Heart right ventricle (tissue), 16 donors: ENCODE measurements at regions of chrX and their contacts with region 1.

Region 1: GRCh38 chrX:133792198-133792953 is 193.0 kb downstream of the GPC3 start:
- DNase-seq: peak; percentile 32 to 35
- ATAC-seq: peak in 7 of 8 donors; percentile 65 to 88 (median 73)
- H3K4me3 ChIP-seq: peak overlapping the region in 6 of 10 donors; percentile 24 to 33 (median 30)
- H3K27ac ChIP-seq: no peak overlapping the region
- H3K4me1 ChIP-seq: no peaks in the 10 kb centered on the region
- H3K27me3 ChIP-seq: peaks cover 0 to 32% (median 0%) of the 10 kb centered on the region in 7 donors
- CTCF ChIP-seq: peak; percentile 62 to 98 (median 83)

Region 2: DNA sequence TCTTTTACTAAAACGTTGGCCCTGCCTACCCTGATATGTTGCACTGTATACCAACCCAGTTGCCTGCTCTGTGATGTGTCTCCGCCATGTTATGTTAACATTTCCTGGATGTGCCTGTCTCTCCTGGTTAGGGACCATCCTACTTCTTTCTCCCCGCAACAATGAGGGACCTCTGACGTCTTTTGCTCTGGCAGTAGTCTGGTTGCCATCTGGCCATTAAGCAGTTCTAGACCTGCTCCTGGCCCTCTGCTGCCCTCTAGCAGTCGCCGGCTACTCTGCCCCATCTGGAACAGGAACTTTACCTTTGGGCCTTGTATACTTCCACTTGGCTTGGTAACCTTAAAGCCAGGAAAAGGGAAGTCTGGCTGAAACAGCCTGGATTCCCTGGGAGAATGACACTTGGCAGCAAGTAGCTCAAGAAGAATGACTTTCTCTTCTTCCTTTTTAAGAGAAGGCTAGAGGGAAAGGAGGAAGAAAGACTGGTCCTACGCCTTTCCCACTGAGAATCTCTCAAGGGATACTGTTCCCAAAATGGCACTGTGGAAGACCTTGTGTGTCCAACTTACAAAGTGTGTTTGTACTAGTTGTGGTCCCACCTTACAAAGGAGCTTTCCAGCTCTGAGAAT is 129.5 kb after region 1 on chrX:
- intact Hi-C with region 1: loop called in 5 of 10 experiments (anchors 5 to 10 kb)
- DNase-seq: peak; percentile 3 to 25
- ATAC-seq: peak in 1 of 8 donors; percentile 75
- H3K4me3 ChIP-seq: no peak overlapping the region
- H3K27ac ChIP-seq: no peak overlapping the region
- H3K4me1 ChIP-seq: no peaks in the 10 kb centered on the region
- H3K27me3 ChIP-seq: peaks cover 0 to 15% (median 0%) of the 10 kb centered on the region in 7 donors
- CTCF ChIP-seq: peak in 7 of 9 donors; percentile 28 to 47 (median 43)

Region 3: DNA sequence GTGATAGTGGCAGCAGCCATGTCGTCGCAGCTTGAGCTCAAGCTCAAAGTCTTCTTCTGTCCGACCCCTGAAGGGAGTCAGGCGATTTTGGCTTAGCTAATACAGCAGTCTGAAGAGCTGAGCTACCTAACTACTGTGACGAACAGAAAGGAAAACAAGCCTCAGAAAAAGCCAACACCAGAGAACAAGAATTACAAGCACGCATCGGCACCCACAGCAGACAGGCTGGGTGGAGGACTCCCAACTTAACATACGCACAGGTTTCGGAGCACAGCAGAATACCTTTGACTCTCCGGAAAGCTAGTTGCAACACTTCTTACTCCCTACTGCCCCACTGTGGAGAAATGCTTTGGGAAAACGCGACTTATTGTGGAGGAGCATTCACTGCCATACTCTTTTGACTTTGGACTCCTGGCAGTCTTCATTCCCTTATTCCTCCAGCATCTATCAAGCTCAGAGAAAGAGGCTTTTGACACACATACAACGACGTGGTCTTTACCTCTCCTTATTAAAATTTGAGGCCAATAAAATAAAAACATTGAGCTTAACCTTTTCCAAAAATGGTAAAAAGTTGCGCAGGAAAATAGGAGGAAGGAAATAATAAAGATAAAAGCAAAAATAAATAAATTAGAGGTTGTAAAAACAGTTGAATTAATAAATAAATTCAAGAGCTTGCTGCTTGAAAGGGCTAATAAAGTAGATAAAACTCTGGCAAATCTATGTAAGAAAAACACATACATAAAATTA is 234.4 kb after region 1 on chrX:
- intact Hi-C with region 1: loop called in 4 of 10 experiments (anchors 5 to 10 kb)
- DNase-seq: peak in 1 of 2 donors; percentile 5
- ATAC-seq: peak in 1 of 8 donors; percentile 50
- H3K4me3 ChIP-seq: peak overlapping the region in 6 of 10 donors; percentile 5 to 31 (median 24)
- H3K27ac ChIP-seq: no peak overlapping the region
- H3K4me1 ChIP-seq: no peaks in the 10 kb centered on the region
- H3K27me3 ChIP-seq: peaks cover 0 to 25% (median 0%) of the 10 kb centered on the region in 7 donors
- CTCF ChIP-seq: peak in 8 of 9 donors; percentile 13 to 54 (median 42)

Region 4: DNA sequence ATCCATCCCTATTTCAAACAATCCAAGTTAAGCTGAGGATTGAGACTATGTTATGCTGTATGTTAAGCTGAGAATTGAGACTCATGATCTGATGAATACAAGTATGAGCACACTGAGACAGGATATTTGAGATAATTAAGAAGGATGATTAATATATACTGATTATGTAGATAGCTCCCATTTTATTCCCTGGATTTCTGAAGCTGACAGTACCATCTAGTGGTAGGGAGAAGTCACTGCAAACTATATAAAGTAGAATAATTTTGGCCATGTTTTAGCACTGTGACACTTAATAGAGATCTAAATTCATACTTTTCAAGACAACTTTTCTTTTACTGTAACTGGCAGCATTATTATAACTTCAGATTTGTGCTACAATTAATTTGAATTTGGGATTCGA is 603.8 kb after region 1 on chrX:
- intact Hi-C with region 1: loop called in 6 of 10 experiments (anchors 5 to 10 kb)
- DNase-seq: no peak
- ATAC-seq: no peak
- H3K4me3 ChIP-seq: no peak overlapping the region
- H3K27ac ChIP-seq: no peak overlapping the region
- H3K4me1 ChIP-seq: no peaks in the 10 kb centered on the region
- H3K27me3 ChIP-seq: no peaks in the 10 kb centered on the region
- CTCF ChIP-seq: peak; percentile 20 to 76 (median 63)